ENCODE measurements at regions of chr2 and their contacts with region 1.

Region 1: DNA sequence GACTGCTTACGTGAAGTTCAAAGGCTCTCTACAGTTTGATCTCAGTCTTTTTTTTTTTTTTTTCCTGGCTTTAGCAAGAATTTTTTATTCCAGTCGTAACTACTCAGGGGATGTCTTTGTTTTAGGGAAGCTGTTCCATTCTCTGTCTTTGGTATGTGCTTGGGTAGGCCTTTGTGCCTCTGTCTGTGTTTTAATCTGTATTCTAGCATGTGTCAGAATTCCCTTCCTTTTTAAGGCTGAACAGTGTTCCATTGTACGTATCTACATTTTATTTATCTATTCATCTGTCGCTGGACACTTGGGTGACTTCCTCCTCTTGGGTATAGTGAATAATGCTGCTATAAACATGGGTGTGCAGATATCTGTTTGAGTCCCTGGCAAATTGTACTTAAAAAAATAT is 42.6 kb downstream of the MYO1B start:
- DNase-seq: no peak

Region 2: DNA sequence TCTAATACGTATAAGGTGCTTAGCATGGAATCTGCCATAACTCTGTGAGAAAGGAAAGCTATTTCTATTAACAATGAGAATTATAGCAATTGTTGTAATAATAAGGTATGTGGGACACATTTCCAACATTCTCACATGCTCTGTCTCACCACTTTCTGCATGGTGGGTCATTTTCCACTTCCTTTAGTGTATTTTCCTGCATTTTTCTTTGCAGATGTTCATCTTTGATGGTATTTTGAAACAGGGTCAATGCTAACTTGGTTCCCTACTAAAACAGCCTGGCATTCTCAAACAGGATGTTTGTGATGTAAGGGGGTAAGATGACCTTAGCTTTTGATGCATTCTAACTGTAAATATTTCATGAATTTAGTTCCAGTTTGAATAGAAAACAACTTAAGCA is 12.0 kb after region 1 on chr2:
- intact Hi-C with region 1: loop called (anchors 2 kb)
- DNase-seq: no peak

Measured in posterior cingulate gyrus (tissue), 11 donors.